PC-3 (cell line): ENCODE measurements at regions of chr20 and their contacts with region 1.

Region 1: DNA sequence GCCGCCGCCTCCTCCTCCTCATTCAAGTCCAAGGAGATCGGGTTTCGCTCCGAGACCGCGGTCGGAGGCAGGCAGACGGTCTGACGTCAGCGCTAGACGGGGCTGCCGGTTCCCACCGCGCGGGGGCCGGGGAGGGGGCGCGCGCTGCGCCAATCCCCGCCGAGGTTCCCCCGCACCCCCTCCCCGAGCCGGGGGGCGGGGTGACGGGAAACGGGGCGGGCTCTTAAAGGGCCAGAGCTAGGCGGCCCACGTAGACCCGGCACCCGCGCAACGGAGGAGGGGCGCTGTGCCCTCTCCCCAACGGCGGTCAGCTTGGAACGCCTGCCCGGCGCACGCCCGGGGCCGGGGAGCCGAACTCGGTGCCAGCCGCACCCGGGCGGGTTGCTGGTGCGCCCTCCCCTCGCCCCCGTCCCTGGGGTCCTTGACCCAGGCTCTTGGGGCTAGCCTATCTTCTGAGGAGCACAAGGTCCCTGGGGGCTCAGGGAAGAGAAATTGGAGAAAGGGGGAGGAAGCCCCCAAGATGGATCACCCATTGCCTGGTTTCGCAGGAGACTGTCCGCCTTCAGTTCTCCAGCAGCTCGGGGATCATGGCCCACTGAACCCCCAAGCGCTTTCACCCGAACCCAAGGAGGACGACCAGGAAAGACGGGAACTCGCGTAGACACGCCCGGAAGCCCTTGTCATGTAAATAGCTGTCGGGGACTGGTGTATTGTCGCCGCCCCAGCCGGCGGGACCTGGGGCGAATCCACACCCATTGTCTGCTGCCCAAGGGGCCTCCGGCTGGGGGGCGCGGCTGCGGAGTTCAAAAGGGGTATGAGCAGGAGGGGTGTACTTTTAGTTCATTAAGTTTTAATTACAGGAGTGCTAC is at the start of gene PMEPA1:
- DNase-seq: peak; percentile 99
- ATAC-seq: peak; percentile 66
- H3K4me3 ChIP-seq: peak within 1 kb of the TSS; percentile 98
- H3K27ac ChIP-seq: peak within 1 kb of the TSS; percentile 88
- H3K4me1 ChIP-seq: peaks cover 70% of the 10 kb centered on the region
- H3K27me3 ChIP-seq: no peaks in the 10 kb centered on the region
- CTCF ChIP-seq: peak; percentile 40; the same call in 1 of the 2 replicates
- total RNA-seq, gene PMEPA1: 21.9 and 29.3 TPM in 2 replicates

Region 2: GRCh38 chr20:57693002-57693640 is 17.0 kb before region 1 on chr20:
- CTCF ChIA-PET with region 1: interaction called, 4 read pairs
- POLR2A ChIA-PET with region 1: interaction called, 5 read pairs
- intact Hi-C with region 1: loop called (anchors 1 kb)
- DNase-seq: peak; percentile 100
- ATAC-seq: peak; percentile 74
- H3K4me3 ChIP-seq: peak overlapping the region; percentile 26; the same call in 1 of the 2 replicates
- H3K27ac ChIP-seq: peak overlapping the region; percentile 90
- H3K4me1 ChIP-seq: peaks cover 80% of the 10 kb centered on the region
- H3K27me3 ChIP-seq: no peaks in the 10 kb centered on the region
- CTCF ChIP-seq: peak; percentile 93

Region 3: GRCh38 chr20:57866221-57867106 is 156.3 kb after region 1 on chr20:
- CTCF ChIA-PET with region 1: no interaction called
- POLR2A ChIA-PET with region 1: no interaction called
- intact Hi-C with region 1: no loop called
- DNase-seq: peak; percentile 17
- ATAC-seq: no peak
- H3K4me3 ChIP-seq: no peak overlapping the region
- H3K27ac ChIP-seq: no peak overlapping the region
- H3K4me1 ChIP-seq: no peaks in the 10 kb centered on the region
- H3K27me3 ChIP-seq: no peaks in the 10 kb centered on the region; the same call in 1 of the 2 replicates
- CTCF ChIP-seq: no peak